Heart left ventricle (tissue), 16 donors: ENCODE measurements at regions of chr1 and their contacts with region 1.

Region 1: DNA sequence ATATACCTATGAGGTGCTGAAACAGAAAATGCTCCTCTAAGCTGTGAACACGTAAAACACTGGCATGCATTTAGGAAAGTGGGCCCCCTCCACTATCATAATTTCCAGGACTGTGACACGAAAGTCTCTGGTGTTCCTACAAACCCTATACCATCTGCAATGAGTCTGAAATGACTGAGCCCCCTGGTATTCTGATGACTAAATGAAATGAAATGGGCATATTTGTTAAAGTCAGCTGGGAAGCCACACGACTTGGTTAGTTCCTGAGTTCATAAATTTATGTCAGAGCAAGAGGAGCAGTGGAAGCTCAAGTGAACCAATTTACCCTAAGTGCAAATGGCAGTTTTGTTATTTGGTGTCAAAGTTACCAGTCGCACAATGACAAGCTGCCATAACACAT is 182.3 kb downstream of the KCTD3 start:
- DNase-seq: no peak
- ATAC-seq: no peak
- H3K4me3 ChIP-seq: no peak overlapping the region
- H3K27ac ChIP-seq: no peak overlapping the region
- H3K4me1 ChIP-seq: no peaks in the 10 kb centered on the region
- H3K27me3 ChIP-seq: no peaks in the 10 kb centered on the region
- CTCF ChIP-seq: no peak
- POLR2A ChIP-seq: no peak

Region 2: GRCh38 chr1:215682232-215682631 is 67.2 kb before region 1 on chr1:
- intact Hi-C with region 1: loop called in 1 of 10 experiments (anchors 10 kb)
- DNase-seq: no peak
- ATAC-seq: no peak
- H3K4me3 ChIP-seq: no peak overlapping the region
- H3K27ac ChIP-seq: no peak overlapping the region
- H3K4me1 ChIP-seq: no peaks in the 10 kb centered on the region
- H3K27me3 ChIP-seq: no peaks in the 10 kb centered on the region
- CTCF ChIP-seq: peak in 1 of 12 donors; percentile 11
- POLR2A ChIP-seq: no peak

Region 3: DNA sequence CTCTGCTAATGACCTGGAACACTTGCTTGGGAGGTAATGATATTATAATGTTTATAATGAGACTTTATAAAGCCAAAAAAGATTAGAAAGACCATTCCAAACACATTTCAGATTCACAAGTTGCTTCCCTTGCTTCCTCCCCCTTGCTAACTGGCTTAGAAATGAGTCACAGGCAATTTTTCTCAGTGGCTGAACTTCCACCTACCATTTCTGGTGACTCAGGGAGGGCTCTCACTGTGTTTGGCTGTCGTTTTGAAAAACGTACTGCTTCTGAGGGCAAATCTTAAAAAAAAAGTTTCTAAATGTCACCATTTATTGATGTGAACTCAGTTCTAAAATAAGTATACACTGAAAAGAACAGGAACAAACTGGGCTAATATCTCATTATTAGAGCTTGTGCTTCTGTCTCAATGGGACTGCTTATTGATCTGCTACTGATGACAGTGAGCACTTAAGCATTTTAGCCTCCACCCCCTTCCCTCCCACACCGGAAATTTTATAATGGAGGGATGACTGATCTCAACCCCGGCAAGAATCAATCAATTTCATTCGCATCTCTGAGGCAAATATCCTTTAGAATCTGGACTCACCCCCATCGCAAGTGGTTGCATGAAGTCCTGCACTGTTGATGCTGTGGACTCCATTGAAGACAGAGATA is 95.9 kb after region 1 on chr1:
- intact Hi-C with region 1: no loop called
- DNase-seq: no peak
- ATAC-seq: no peak
- H3K4me3 ChIP-seq: no peak overlapping the region
- H3K27ac ChIP-seq: no peak overlapping the region
- H3K4me1 ChIP-seq: no peaks in the 10 kb centered on the region
- H3K27me3 ChIP-seq: no peaks in the 10 kb centered on the region
- CTCF ChIP-seq: no peak
- POLR2A ChIP-seq: no peak